ENCODE measurements at regions of chr15 and their contacts with region 1.

Region 1: DNA sequence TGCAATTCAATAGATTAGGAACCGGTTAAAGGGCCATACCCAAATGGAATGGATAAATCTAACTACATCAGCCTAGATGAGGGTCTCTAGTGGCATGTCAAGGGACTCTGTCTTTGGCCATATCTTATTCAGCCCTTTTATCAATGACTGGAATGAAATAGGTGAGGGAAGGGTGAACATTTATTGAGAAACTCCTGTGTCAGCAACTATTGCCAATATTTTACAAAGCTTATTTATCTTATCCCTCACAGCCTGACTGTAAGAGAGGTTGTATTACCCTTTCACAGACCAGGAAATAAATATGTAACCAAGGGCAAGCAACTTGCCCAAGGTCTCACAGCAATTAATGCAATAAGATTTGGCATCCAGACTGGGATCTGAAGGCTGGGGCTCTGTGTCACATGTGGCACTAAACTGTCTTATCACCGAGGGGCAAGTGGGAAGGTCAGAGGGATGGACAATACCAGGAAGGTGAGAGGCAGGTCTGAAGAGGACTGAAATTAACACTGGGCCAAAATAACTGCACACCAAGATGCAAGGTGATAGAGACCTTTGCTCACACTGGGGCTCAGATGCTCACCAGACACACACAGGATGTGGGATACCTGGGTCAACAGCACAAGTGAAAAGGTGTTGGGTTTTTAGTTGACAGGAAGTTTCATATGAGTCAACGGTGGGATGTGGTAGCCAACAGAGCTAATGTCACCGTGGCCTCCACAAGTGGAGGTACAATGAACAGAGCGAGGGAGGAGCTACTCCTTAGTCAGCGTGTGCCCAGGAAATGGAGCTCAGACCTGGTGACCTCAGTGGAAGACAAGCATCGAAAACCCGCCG is 261.3 kb downstream of the RPLP1 start:
- DNase-seq: peak; percentile 83
- H3K4me3 Mint-ChIP-seq: no peak overlapping the region
- H3K27ac Mint-ChIP-seq: peak overlapping the region; percentile 68
- H3K4me1 Mint-ChIP-seq: peaks cover 59% of the 10 kb centered on the region
- H3K27me3 Mint-ChIP-seq: peaks cover 5% of the 10 kb centered on the region

Region 2: GRCh38 chr15:69380100-69380727 is 333.7 kb before region 1 on chr15:
- intact Hi-C with region 1: no loop called
- DNase-seq: no peak
- H3K4me3 Mint-ChIP-seq: no peak overlapping the region
- H3K27ac Mint-ChIP-seq: no peak overlapping the region
- H3K4me1 Mint-ChIP-seq: no peaks in the 10 kb centered on the region
- H3K27me3 Mint-ChIP-seq: peaks cover 7% of the 10 kb centered on the region

Region 3: DNA sequence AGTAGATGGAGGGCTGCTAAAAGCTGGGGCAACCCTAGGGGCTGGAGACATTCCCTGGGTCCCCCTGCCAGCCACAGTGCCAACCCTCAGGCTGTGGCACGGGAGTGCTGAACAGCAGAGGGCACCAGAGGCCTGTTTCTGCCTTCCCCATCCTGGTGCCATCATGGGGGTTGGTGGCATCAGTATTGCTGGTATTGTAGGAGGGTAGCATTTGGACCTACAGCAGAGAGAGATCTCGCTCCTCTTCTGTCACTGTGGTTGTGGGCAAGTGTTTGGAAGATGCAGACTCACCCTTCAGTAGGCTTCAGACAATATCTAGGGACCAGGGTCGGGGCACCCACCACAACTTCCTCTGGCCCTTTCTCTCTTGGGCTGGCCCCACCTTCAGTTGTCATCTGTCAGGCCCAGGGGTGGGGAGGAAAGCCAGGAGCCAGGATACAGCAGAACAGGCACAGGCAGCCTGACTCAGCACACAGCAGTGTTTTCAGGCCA is 137.9 kb before region 1 on chr15:
- intact Hi-C with region 1: loop called (anchors 5 kb)
- DNase-seq: peak; percentile 38
- H3K4me3 Mint-ChIP-seq: no peak overlapping the region
- H3K27ac Mint-ChIP-seq: no peak overlapping the region
- H3K4me1 Mint-ChIP-seq: peaks cover 29% of the 10 kb centered on the region
- H3K27me3 Mint-ChIP-seq: peaks cover 10% of the 10 kb centered on the region

Region 4: DNA sequence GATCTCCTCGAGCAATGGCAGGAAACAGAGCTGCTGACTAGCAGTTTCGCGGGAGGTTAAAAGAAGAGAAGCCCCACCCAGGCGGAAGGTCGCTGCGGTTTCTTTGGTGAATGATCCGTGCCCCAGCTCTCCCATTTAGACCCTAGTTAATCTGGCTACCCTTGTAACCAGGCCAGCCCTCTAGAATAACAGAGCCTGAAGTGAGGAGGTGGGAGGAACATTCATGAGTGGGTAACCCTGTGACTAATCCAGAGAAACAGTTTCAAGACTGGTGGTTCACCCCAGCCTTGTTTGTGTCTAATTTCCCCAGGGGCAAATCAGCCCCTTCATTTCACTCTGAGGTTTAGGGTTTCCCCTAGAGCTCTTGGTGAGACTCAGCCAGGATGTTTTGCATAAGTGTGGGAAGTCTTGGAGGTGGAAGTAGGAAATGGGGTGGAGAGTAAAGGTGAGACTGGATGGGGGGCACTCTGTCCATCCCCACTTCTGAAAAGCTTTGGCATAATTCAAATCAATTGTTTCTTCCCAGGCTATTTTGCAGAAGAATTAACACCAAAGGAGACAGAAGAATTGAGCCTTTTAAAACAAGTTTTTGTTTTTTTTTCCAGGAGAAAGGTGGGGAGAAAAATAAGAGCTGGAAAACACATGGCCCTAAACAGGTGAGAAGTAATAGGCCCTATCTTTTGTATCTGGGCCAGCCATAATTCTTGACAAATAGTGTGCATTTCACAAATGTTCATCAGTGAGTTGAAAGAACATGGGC is 41.8 kb after region 1 on chr15:
- intact Hi-C with region 1: loop called (anchors 1 kb)
- DNase-seq: peak; percentile 84
- H3K4me3 Mint-ChIP-seq: peak overlapping the region; percentile 34
- H3K27ac Mint-ChIP-seq: peak overlapping the region; percentile 82
- H3K4me1 Mint-ChIP-seq: peaks cover 70% of the 10 kb centered on the region
- H3K27me3 Mint-ChIP-seq: no peaks in the 10 kb centered on the region

Region 5: DNA sequence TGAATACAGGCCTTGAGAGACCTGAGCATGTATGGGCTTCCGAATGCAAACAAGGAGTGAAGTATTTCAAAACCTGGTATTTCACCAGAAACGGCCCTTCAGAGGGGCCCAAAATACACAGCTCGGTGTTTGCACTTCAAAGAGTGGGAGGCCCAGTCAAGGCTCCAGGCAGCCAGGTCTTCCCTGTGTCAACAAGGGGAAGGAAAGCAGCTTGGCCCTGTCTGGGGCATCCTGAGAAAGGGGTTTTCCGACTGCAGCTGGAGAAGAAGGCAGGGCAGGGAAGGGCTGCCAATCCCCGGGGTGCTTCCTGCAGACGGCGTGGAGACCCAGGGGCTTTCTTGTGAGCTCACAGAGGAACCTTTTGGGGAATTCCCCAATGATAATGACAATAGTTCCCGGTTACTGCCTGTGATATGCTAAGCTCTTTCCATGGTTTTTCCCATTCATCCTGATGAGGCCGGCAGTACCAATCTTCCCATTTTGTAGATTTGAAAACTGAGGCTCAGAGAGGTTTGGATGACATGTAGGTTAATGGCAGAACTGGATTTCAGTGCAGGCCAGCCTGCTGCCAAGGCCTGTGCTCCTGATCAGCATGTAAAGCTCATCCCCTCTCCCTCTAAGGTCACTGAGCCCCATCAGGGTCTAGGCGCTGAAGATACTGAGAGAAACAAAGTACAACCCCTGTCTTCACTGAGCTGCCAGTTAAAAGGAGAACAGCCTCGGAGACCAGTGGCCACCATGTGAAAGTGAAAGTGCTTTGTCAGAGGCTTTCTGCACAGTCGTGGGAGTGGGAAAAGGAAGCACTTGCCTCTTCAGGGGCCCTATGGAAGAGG is 426.8 kb after region 1 on chr15:
- intact Hi-C with region 1: loop called (anchors 5 kb)
- DNase-seq: no peak
- H3K4me3 Mint-ChIP-seq: no peak overlapping the region
- H3K27ac Mint-ChIP-seq: peak overlapping the region; percentile 40
- H3K4me1 Mint-ChIP-seq: peaks cover 34% of the 10 kb centered on the region
- H3K27me3 Mint-ChIP-seq: peaks cover 56% of the 10 kb centered on the region

Measured in activated T-helper 2 cell treated with anti-CD3 and anti-CD28 coated beads, Interferon-gamma antibody, Interleukin-2, Interleukin-4, amounts not matched to agents 10 μg/mL and 5 μg/mL and 100 μg/mL, durations not matched to agents 14 hours and 24 hours and 36 hours (primary cell).